HepG2 (cell line): ENCODE measurements at regions of chr3 and their contacts with region 1.

Region 1: DNA sequence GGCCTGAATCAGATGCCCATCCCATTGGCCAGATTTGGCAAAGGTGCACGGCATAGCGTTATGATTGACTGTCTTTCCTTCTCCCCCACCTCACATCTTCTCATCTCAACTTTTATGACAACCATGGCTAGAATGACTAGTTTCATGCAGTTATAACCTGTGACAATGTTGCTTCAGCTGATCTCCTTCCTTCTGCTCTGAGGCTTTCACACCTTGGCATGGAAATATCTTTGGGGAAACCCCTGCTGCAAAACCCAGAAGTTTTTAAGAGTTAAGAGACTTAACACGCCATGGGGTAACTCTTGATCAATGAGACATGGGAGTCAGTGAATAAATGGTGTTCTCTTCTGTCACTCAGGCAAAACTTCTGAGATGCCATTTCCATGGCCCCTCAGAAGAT is 290.7 kb upstream of the MDFIC2 start:
- DNase-seq: no peak
- ATAC-seq: no peak
- H3K4me3 ChIP-seq: no peak overlapping the region
- H3K27ac ChIP-seq: no peak overlapping the region
- H3K4me1 ChIP-seq: no peaks in the 10 kb centered on the region
- H3K27me3 ChIP-seq: no peaks in the 10 kb centered on the region
- CTCF ChIP-seq: no peak
- EP300 ChIP-seq: no peak
- POLR2A ChIP-seq: no peak
- RAD21 ChIP-seq: no peak

Region 2: GRCh38 chr3:71821116-71821515 is 1218.0 kb after region 1 on chr3:
- CTCF ChIA-PET with region 1: no interaction called
- POLR2A ChIA-PET with region 1: no interaction called
- in situ Hi-C with region 1: no loop called
- intact Hi-C with region 1: loop called (anchors 5 kb)
- DNase-seq: no peak
- ATAC-seq: no peak
- H3K4me3 ChIP-seq: no peak overlapping the region
- H3K27ac ChIP-seq: no peak overlapping the region
- H3K4me1 ChIP-seq: no peaks in the 10 kb centered on the region
- H3K27me3 ChIP-seq: peaks cover 1 to 2% of the 10 kb centered on the region in 2 experiments; a peak in 1 of 5 replicates
- CTCF ChIP-seq: no peak
- EP300 ChIP-seq: no peak
- POLR2A ChIP-seq: no peak
- RAD21 ChIP-seq: no peak